ENCODE measurements at regions of chr2 and their contacts with region 1.

Region 1: GRCh38 chr2:207625018-207625907 is at the start of gene METTL21A:
- H3K4me3 ChIP-seq: peak within 1 kb of the TSS; percentile 81
- H3K27ac ChIP-seq: peak within 1 kb of the TSS; percentile 88
- H3K4me1 ChIP-seq: 0 out of 2 replicates have a peak, but pooled peaks cover 3% of the 10 kb centered on the region
- CTCF ChIP-seq: peak; percentile 90

Region 2: DNA sequence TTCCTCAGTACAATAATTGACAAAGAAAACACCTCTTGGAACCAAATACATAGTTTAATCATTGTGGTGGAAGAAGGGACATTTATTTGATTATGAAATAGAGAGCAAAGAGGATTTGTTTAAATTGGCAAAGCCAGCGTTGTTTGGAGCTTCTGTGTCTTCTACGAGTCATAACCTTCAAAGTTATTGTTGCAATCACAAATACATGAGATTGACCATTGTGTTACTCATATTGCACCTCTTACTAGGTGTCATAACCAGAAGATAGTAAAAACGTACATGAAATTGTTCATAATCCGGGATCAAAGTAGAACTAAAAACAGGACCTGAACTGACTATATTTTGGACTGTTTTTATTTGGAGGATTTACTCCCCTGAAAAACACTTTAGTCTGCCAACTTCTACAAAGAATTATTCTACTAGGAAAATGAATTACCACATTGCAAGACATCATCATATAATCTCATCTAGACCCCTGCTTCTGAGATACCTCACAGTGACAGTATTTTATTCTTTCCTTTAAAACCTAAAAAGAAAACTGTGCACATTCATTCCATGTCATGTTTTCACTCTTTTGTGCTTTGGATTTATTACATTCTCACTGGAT is 307.8 kb before region 1 on chr2:
- CTCF ChIA-PET with region 1: no interaction called
- POLR2A ChIA-PET with region 1: no interaction called
- H3K4me3 ChIP-seq: no peak overlapping the region
- H3K27ac ChIP-seq: no peak overlapping the region
- H3K4me1 ChIP-seq: no peaks in the 10 kb centered on the region
- CTCF ChIP-seq: no peak

Region 3: DNA sequence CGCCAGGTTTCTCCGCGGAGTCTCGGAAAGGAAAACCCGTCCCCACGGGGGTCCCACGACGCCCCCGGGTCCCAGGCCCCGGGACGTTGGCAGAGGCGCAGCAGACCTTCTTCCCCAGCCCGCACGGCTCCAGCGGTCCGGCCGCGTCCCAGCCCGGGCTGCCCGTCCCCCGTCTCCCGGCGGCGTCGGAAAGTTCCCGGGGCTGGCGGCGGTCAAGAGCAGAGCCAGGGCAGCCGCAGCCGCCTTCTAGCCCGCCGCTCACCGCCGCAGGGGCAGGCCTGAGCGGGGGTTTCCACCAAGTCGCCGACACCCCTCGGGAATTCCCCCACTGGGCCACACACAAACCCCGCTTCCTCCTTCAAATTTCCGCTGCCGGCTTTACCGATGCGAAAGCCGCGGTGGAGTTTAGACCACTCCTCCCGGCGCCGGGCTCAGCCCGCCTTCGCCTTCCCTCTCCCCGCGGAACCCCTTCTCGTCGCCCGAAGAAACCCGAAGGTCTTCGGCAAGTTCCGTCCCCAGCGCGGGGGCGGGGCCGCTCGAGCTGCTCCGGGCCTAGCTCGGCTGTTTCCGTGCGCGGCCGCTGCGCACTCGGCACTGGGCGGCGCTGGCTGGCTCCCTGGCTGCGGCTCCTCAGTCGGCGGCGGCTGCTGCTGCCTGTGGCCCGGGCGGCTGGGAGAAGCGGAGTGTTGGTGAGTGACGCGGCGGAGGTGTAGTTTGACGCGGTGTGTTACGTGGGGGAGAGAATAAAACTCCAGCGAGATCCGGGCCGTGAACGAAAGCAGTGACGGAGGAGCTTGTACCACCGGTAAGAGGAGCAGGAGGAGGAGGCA is 95.7 kb before region 1 on chr2 and contains the start of gene CREB1:
- CTCF ChIA-PET with region 1: no interaction called
- POLR2A ChIA-PET with region 1: interaction called, 22 read pairs
- H3K4me3 ChIP-seq: peak within 1 kb of the TSS; percentile 96
- H3K27ac ChIP-seq: peak within 1 kb of the TSS; percentile 95
- H3K4me1 ChIP-seq: peaks cover 3% of the 10 kb centered on the region; the same call in 1 of the 2 replicates
- CTCF ChIP-seq: no peak; the same call in 1 of the 2 replicates

Region 4: GRCh38 chr2:207734264-207734635 is 109.0 kb after region 1 on chr2:
- CTCF ChIA-PET with region 1: interaction called, 10 read pairs
- POLR2A ChIA-PET with region 1: no interaction called
- H3K4me3 ChIP-seq: no peak overlapping the region
- H3K27ac ChIP-seq: no peak overlapping the region
- H3K4me1 ChIP-seq: no peaks in the 10 kb centered on the region
- CTCF ChIP-seq: peak; percentile 72

Region 5: DNA sequence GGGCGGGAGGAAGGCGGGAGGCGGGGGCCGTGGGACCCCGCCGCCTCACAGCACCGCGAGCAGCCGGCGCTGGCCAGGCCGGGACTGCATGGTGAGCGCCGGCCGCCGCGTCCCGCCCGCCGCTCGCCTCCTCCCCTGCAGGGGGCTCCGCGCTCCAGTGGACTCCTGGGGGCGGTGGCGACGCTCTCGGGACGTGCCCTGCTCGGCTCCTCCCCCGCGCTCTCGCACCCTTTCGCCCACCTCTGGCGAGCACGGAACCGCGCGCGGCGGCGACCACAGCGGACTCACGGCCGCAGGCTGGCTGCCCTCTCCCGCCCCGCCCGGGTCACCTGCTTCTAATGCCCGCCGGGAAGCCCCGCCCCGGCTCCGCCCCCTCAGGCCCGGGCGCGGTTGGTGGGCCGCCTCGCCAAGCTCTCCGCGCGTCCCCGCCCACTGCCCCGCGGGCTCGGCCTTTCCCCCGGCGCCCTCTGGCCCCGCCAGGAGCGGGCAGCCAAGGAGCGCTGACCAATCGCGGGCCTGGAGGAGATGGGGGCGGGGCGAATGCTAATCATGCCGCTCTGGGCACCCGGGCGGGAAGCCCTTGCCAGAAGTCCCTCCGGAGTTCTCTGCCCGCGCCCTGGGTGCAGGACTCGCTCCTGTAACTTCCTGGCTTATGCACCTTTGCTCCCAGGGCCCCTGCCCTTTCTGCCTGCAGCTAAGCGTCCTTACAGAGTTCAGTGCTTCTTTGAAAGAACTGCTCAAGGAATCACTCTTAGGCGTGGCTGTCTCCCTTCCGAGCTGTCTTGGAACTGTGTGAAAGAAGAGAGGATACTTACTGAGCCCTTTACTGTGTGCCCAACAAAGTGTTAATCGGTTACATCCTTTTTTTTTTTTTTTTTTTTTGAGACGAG is 144.6 kb after region 1 on chr2 and contains the start of gene FZD5:
- CTCF ChIA-PET with region 1: no interaction called
- POLR2A ChIA-PET with region 1: no interaction called
- H3K4me3 ChIP-seq: peak within 1 kb of the TSS; percentile 86
- H3K27ac ChIP-seq: peak within 1 kb of the TSS; percentile 91
- H3K4me1 ChIP-seq: peaks cover 17% of the 10 kb centered on the region
- CTCF ChIP-seq: 0 out of 2 replicates have a peak, but pooled peaks have one; percentile 55

Measured in HEK293 (cell line).